AG04450 (cell line): ENCODE measurements at regions of chr1 and their contacts with region 1.

Region 1: GRCh38 chr1:6554031-6554906 is at the start of gene NOL9:
- DNase-seq: peak; percentile 79
- H3K4me3 ChIP-seq: peak within 1 kb of the TSS; percentile 91
- H3K27ac ChIP-seq: no peak within 1 kb of the TSS
- H3K27me3 ChIP-seq: no peaks in the 10 kb centered on the region
- CTCF ChIP-seq: peak; percentile 91
- polyA plus RNA-seq, gene NOL9: 17.9 and 23.6 TPM in 2 replicates

Region 2: DNA sequence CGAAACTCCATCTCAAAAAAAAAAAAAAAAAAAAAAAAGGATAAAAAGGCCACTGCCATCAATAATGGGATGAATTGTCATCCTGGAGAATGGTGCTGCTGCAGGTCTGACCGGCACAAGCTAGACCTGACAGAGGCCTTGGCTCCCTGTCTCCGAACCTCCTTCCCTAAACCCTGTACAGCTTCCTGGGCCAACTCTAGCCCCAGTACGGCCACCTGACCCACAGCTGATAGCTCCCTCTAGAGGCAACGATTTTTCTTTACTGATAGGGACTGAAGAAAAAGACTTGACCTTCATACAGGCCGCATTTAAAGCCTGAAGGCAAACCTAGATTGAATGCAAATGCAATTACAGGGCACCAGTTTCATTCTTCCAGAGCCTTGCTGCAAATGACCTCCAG is 30.7 kb before region 1 on chr1:
- CTCF ChIA-PET with region 1: interaction called, 26 read pairs
- POLR2A ChIA-PET with region 1: no interaction called
- DNase-seq: no peak
- H3K4me3 ChIP-seq: no peak overlapping the region
- H3K27ac ChIP-seq: no peak overlapping the region
- H3K27me3 ChIP-seq: no peaks in the 10 kb centered on the region
- CTCF ChIP-seq: peak; percentile 63

Region 3: GRCh38 chr1:6538956-6539355 is 15.3 kb before region 1 on chr1:
- CTCF ChIA-PET with region 1: interaction called, 29 read pairs
- POLR2A ChIA-PET with region 1: interaction called, 3 read pairs
- DNase-seq: no peak
- H3K4me3 ChIP-seq: no peak overlapping the region
- H3K27ac ChIP-seq: no peak overlapping the region
- H3K27me3 ChIP-seq: no peaks in the 10 kb centered on the region
- CTCF ChIP-seq: no peak

Region 4: GRCh38 chr1:6574025-6574620 is 19.9 kb after region 1 on chr1:
- CTCF ChIA-PET with region 1: interaction called, 15 read pairs
- POLR2A ChIA-PET with region 1: interaction called, 9 read pairs
- DNase-seq: no peak
- H3K4me3 ChIP-seq: no peak overlapping the region
- H3K27ac ChIP-seq: no peak overlapping the region
- H3K27me3 ChIP-seq: peaks cover 15% of the 10 kb centered on the region
- CTCF ChIP-seq: no peak

Region 5: GRCh38 chr1:6579374-6580118 is 25.3 kb after region 1 on chr1 and contains the start of gene ZBTB48:
- CTCF ChIA-PET with region 1: interaction called, 15 read pairs
- POLR2A ChIA-PET with region 1: interaction called, 5 read pairs
- DNase-seq: peak; percentile 89
- H3K4me3 ChIP-seq: peak within 1 kb of the TSS; percentile 86
- H3K27ac ChIP-seq: peak within 1 kb of the TSS; percentile 77
- H3K27me3 ChIP-seq: no peaks in the 10 kb centered on the region
- CTCF ChIP-seq: no peak
- polyA plus RNA-seq, gene ZBTB48: 7.5 and 8.8 TPM in 2 replicates

Region 6: DNA sequence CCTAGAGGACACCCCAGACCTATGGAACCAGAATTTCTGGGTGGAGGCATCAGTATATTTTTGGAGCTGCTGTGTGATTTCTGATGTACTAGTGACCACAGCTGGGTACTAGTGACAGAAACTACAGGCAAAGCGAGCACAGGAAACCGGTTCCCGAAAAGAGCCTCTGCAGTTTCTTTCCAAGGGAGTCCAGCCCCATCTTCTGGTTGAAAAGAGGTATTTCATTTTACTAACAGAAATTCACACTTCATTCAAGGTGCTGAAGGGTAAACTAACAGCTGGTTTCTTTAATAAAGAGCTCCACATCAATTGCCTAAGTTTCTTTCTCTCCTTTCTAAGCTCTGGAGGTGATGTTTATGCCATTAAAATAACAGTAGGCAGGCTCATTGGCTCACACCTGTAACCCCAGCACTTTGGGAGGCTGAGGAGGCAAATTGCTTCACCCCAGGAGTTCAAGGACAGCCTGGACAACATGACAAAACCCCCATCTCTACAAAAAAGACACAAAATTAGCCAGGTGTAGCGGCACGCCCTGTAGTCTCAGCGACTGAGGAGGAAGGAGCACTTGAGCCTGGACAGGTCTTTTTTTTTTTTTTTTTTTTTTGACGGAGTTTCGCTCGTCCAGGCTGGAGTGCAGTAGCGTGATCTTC is 92.4 kb after region 1 on chr1:
- CTCF ChIA-PET with region 1: interaction called, 34 read pairs
- POLR2A ChIA-PET with region 1: no interaction called
- DNase-seq: no peak
- H3K4me3 ChIP-seq: no peak overlapping the region
- H3K27ac ChIP-seq: no peak overlapping the region
- H3K27me3 ChIP-seq: no peaks in the 10 kb centered on the region
- CTCF ChIP-seq: peak; percentile 69

Region 7: GRCh38 chr1:6794164-6794563 is 239.9 kb after region 1 on chr1:
- CTCF ChIA-PET with region 1: no interaction called
- POLR2A ChIA-PET with region 1: no interaction called
- DNase-seq: peak; percentile 29
- H3K4me3 ChIP-seq: no peak overlapping the region
- H3K27ac ChIP-seq: no peak overlapping the region
- H3K27me3 ChIP-seq: no peaks in the 10 kb centered on the region
- CTCF ChIP-seq: peak; percentile 49